ENCODE measurements at regions of chr19 and their contacts with region 1.

Region 1: GRCh38 chr19:12294249-12295158 is at the start of gene ZNF44:
- DNase-seq: peak; percentile 99
- H3K4me3 Mint-ChIP-seq: peak within 1 kb of the TSS; percentile 98
- H3K27ac Mint-ChIP-seq: peak within 1 kb of the TSS; percentile 98
- H3K4me1 Mint-ChIP-seq: peaks cover 27% of the 10 kb centered on the region
- H3K27me3 Mint-ChIP-seq: no peaks in the 10 kb centered on the region
- total RNA-seq, gene ZNF44: 8.4 TPM in 2 replicates

Region 2: GRCh38 chr19:12162882-12163806 is 131.4 kb before region 1 on chr19 and contains the start of gene ZNF136:
- intact Hi-C with region 1: loop called (anchors 1 kb)
- DNase-seq: peak; percentile 98
- H3K4me3 Mint-ChIP-seq: peak within 1 kb of the TSS; percentile 95
- H3K27ac Mint-ChIP-seq: peak within 1 kb of the TSS; percentile 96
- H3K4me1 Mint-ChIP-seq: peaks cover 28% of the 10 kb centered on the region
- H3K27me3 Mint-ChIP-seq: no peaks in the 10 kb centered on the region
- total RNA-seq, gene ZNF136: 9.4 and 10.3 TPM in 2 replicates

Region 3: GRCh38 chr19:12440541-12441316 is 146.2 kb after region 1 on chr19 and contains the start of gene ZNF443:
- intact Hi-C with region 1: loop called (anchors 2 kb)
- DNase-seq: peak; percentile 100
- H3K4me3 Mint-ChIP-seq: peak within 1 kb of the TSS; percentile 98
- H3K27ac Mint-ChIP-seq: peak within 1 kb of the TSS; percentile 92
- H3K4me1 Mint-ChIP-seq: peaks cover 11% of the 10 kb centered on the region
- H3K27me3 Mint-ChIP-seq: no peaks in the 10 kb centered on the region
- total RNA-seq, gene ZNF443: 4.8 and 5.7 TPM in 2 replicates

Region 4: GRCh38 chr19:12551060-12551832 is 256.7 kb after region 1 on chr19 and contains the start of gene ZNF564:
- intact Hi-C with region 1: loop called (anchors 5 kb)
- DNase-seq: peak; percentile 98
- H3K4me3 Mint-ChIP-seq: peak within 1 kb of the TSS; percentile 95
- H3K27ac Mint-ChIP-seq: peak within 1 kb of the TSS; percentile 96
- H3K4me1 Mint-ChIP-seq: peaks cover 23% of the 10 kb centered on the region
- H3K27me3 Mint-ChIP-seq: no peaks in the 10 kb centered on the region
- total RNA-seq, gene ZNF564: 5.6 and 7.0 TPM in 2 replicates